Activated CD4-positive, alpha-beta T cell treated with anti-CD3 and anti-CD28 coated beads, Interleukin-2, amount 10 ng/mL, durations not matched to agents 7 days and 5 days (primary cell): ENCODE measurements at regions of chr2 and their contacts with region 1.

Region 1: DNA sequence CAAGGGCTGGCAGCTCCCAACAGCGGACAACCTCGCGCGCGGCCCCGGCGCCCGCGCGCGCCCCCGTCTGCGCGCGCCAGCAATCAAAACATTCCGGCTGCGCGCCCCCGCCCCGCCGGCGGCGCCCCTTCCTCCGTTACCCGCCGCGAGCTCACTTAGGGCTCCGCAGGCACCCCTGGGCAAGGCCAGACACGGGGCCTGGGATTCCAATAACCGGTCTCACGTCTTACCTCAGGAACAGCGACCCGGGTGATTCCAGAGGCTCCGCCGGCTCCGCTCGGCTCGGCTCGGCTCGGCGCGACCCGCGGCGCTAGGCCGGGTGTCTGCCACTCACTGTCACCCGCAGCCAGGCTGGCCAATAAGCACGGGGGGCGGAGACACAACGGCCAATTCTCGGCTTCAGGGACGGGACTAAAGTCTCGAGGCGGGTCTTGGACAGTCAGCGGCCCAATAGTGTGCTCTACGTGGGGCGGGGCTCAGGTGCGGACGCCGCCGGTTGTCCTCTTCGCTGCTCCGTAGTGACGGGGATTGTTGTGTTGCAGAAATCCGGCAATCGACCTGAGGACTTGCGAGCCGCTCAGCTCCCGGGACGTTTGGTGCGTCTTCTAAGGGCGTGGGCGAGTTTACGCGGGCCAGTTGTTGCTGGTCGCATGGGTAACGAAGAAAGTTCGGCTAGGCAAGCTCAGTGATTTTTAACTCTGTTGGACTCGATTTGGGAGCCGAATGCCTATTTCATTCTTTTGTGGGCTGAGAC is at the starts of genes ANKZF1 and ATG9A:
- DNase-seq: peak; percentile 100
- H3K4me3 Mint-ChIP-seq: peak within 1 kb of the TSS; percentile 98
- H3K27ac Mint-ChIP-seq: peak within 1 kb of the TSS; percentile 100
- H3K4me1 Mint-ChIP-seq: peaks cover 60% of the 10 kb centered on the region
- H3K27me3 Mint-ChIP-seq: no peaks in the 10 kb centered on the region
- total RNA-seq, gene ANKZF1: 92.0 to 100 TPM
- total RNA-seq, gene ATG9A: 48.5 to 52.9 TPM

Region 2: DNA sequence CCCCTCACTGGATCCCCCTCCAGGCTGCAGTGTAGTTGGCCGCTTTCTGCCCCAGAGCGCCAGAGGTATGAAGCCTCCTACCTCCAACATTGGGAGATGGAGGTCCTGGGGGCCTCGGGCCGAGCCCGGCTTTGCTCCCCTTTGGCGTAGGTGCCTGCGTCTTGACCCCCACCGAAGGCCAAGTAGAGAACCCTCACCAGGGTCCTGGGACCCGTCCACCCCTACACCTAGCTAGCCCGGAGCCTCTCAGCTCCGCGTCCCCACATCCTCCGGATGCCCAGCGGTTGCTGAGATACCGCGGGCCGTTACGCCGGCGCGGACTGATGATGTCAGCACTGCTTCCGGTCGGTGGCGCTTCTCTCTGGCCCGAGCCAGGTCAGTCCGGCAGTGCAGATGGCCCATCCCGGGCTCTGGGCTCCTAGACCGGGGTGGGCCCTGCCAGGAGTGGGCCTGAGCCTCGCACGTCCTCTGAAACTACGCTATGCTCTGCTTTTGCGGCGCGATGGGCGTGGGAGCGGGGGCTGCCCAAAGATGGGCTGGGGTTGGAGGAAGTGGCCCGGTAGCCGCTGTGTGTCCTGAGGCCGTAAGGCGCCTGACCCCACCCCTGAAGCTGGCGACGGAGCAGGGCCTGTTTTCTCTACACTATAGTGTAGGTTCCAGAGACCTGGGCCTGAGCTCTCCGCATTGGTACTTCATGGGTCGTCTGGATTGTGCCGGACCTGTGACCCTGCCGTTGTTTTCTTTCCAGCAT is 15.8 kb after region 1 on chr2 and contains the starts of genes GLB1L and STK16:
- CTCF ChIA-PET with region 1: interaction called, 14 read pairs
- POLR2A ChIA-PET with region 1: interaction called, 3 read pairs
- DNase-seq: peak; percentile 89
- H3K4me3 Mint-ChIP-seq: peak within 1 kb of the TSS; percentile 99
- H3K27ac Mint-ChIP-seq: peak within 1 kb of the TSS; percentile 99
- H3K4me1 Mint-ChIP-seq: peaks cover 65% of the 10 kb centered on the region
- H3K27me3 Mint-ChIP-seq: no peaks in the 10 kb centered on the region
- total RNA-seq, gene GLB1L: 3.3 to 3.4 TPM
- total RNA-seq, gene STK16: 33.0 to 33.5 TPM

Region 3: GRCh38 chr2:219736209-219736608 is 506.7 kb after region 1 on chr2:
- CTCF ChIA-PET with region 1: no interaction called
- POLR2A ChIA-PET with region 1: no interaction called
- DNase-seq: peak; percentile 12
- H3K4me3 Mint-ChIP-seq: no peak overlapping the region
- H3K27ac Mint-ChIP-seq: no peak overlapping the region
- H3K4me1 Mint-ChIP-seq: no peaks in the 10 kb centered on the region
- H3K27me3 Mint-ChIP-seq: peaks cover 9% of the 10 kb centered on the region